ENCODE measurements at regions of chr6 and their contacts with region 1.

Region 1: DNA sequence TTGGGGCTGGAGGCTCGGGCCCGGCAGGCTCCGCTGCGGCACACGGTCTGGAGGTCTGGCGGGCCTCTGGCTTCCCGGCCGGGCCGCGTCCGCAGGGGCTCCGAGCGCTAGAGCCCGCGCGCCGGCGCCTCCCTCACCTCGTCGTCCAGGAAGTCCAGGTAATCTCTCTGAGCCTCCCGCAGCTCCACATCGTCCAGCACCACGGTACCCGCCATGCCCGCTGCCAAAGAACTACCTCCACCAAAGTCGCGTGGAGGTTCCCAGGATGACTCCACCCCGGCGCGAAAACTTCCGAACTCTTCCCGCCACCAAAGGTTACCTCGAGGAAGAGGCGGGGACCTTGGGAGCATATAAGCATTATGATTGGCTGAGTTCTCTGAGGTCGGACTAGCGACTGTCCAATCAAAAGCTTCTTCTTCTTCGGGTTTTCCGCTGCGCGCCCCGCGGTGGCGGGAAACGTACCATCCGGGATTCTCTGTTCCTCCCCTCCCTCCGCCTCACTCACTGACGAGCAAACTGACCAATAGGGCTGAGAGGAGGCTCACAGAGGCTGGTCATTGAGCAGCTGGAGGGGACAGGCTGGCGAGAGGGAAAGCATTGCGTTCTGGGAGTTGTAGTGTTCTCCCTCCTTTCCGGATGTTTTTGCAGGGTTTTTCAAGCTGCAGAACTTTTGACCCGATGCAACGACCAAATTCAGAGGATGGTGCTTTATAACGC is at the start of gene MCM3:
- DNase-seq: peak; percentile 92
- ATAC-seq: peak; percentile 98
- H3K4me3 Mint-ChIP-seq: peak within 1 kb of the TSS; percentile 83
- H3K27ac Mint-ChIP-seq: peak within 1 kb of the TSS; percentile 71
- H3K4me1 Mint-ChIP-seq: peaks cover 43% of the 10 kb centered on the region
- H3K27me3 Mint-ChIP-seq: no peaks in the 10 kb centered on the region
- total RNA-seq, gene MCM3: 180 to 182 TPM

Region 2: DNA sequence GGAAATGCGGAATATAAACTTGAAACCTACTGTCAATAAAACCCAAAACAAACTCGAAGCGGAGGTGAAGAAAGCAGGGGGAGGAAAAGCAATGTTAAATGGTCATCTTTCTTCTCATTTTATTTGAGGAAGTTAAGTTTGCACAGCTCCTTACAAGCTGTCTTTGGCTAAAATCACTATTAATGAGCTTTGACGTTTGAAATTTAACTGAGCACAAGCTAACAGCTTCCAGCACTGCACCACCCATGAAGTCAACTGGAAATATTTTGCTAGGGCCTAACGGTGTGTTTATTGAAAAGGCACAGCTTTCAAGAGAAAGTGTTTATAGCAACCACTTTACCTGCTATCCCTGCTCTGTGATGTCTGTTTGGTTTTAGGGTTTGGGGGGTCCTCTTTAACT is 301.1 kb before region 1 on chr6:
- POLR2A ChIA-PET with region 1: no interaction called
- DNase-seq: no peak
- ATAC-seq: no peak
- H3K4me3 Mint-ChIP-seq: no peak overlapping the region
- H3K27ac Mint-ChIP-seq: no peak overlapping the region
- H3K4me1 Mint-ChIP-seq: no peaks in the 10 kb centered on the region
- H3K27me3 Mint-ChIP-seq: peaks cover 2% of the 10 kb centered on the region

Region 3: DNA sequence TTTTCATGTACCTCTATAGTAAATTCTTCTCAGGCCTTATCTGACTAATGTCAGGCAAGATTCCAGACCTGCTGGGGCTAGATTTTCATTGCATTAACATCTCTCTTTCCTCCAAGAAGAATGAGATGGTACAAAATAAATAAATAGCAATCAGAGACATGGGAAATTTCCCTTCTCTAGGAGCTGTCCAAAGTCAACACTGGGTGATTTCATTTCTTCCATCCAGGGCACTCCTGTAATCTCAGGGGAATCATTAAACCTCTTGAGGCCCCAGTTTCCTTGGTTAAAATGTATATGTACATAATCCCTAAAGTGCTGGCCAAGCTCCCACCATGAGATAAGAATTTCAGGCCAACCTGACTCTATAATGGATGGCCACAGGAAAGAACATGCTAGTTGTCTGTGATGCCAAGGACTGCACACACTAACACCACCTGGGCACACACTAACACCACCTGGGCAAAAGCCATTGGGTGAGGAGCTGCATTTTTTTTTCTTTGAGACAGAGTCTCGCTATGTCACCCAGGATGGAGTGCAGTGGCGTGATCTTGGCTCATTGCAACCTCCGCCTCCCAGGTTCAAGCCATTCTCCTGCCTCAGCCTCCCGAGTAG is 41.2 kb before region 1 on chr6:
- POLR2A ChIA-PET with region 1: no interaction called
- DNase-seq: no peak
- ATAC-seq: no peak
- H3K4me3 Mint-ChIP-seq: no peak overlapping the region
- H3K27ac Mint-ChIP-seq: no peak overlapping the region
- H3K4me1 Mint-ChIP-seq: no peaks in the 10 kb centered on the region
- H3K27me3 Mint-ChIP-seq: peaks cover 61% of the 10 kb centered on the region

Region 4: DNA sequence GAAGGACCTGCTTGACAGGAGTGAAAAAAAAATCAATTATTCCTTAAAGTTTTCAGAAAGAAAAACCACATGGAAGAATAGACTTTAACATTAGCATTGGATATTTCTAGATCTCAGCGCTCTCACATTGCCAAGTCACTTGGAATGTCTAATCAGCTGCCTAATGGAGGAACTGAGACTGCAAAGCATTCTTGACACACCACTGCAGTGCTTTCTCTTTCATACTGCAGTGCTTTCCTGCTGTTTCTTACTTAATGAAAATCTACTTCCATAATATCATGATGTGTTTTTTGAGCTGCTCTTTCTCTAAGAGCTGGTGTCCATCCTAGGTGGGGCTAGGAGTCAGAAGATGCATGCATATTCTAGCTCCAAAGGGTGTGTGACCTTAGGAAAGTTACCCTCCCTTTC is 20.4 kb after region 1 on chr6:
- POLR2A ChIA-PET with region 1: interaction called, 29 read pairs
- DNase-seq: no peak
- ATAC-seq: peak; percentile 21
- H3K4me3 Mint-ChIP-seq: peak overlapping the region; percentile 51
- H3K27ac Mint-ChIP-seq: peak overlapping the region; percentile 81
- H3K4me1 Mint-ChIP-seq: peaks cover 40% of the 10 kb centered on the region
- H3K27me3 Mint-ChIP-seq: no peaks in the 10 kb centered on the region

Region 5: GRCh38 chr6:52389626-52390360 is 105.2 kb after region 1 on chr6:
- POLR2A ChIA-PET with region 1: interaction called, 34 read pairs
- DNase-seq: peak; percentile 49
- ATAC-seq: peak; percentile 54
- H3K4me3 Mint-ChIP-seq: peak overlapping the region; percentile 80
- H3K27ac Mint-ChIP-seq: peak overlapping the region; percentile 93
- H3K4me1 Mint-ChIP-seq: peaks cover 59% of the 10 kb centered on the region
- H3K27me3 Mint-ChIP-seq: no peaks in the 10 kb centered on the region

Region 6: DNA sequence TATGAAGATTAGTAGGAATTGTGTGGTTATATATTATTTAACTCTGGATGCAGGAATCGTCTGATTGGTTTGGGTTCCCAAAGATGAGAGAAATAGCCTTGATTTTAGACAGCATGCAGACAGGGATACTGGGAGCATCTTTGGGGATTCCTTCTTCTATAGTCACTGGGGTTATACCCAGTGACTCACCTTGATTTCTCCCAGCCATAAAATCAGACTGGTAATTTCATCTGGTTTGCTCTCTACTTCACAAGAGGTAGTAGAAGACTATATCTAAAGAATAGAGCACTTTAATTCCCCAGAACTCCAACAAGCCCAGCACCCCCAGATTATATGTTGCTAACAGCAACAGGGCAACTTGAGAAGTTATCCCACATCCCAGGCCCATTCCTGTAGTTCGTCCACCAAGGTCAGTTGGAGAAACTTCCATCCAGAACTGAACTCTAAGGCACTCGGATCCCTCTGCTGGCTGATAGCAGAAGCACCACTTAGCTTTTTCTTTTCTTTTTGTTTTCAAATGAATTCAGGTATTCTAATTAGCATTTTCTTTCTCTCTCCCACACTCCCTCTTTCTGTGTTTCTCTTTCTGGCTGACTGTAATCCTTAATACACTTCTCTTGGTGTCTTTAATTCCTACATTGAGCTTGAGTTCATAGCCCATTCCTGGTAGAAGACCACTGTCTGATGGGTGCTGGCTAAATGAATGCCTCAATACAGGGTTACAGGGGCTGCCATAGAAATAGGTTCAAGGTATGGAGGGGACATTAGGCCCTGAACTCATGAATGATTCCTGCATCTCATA is 115.1 kb after region 1 on chr6:
- POLR2A ChIA-PET with region 1: interaction called, 52 read pairs
- DNase-seq: no peak
- ATAC-seq: peak; percentile 21
- H3K4me3 Mint-ChIP-seq: no peak overlapping the region
- H3K27ac Mint-ChIP-seq: peak overlapping the region; percentile 84
- H3K4me1 Mint-ChIP-seq: peaks cover 52% of the 10 kb centered on the region
- H3K27me3 Mint-ChIP-seq: no peaks in the 10 kb centered on the region